Transverse colon (tissue), 4 donors: ENCODE measurements at regions of chr19 and their contacts with region 1.

Region 1: DNA sequence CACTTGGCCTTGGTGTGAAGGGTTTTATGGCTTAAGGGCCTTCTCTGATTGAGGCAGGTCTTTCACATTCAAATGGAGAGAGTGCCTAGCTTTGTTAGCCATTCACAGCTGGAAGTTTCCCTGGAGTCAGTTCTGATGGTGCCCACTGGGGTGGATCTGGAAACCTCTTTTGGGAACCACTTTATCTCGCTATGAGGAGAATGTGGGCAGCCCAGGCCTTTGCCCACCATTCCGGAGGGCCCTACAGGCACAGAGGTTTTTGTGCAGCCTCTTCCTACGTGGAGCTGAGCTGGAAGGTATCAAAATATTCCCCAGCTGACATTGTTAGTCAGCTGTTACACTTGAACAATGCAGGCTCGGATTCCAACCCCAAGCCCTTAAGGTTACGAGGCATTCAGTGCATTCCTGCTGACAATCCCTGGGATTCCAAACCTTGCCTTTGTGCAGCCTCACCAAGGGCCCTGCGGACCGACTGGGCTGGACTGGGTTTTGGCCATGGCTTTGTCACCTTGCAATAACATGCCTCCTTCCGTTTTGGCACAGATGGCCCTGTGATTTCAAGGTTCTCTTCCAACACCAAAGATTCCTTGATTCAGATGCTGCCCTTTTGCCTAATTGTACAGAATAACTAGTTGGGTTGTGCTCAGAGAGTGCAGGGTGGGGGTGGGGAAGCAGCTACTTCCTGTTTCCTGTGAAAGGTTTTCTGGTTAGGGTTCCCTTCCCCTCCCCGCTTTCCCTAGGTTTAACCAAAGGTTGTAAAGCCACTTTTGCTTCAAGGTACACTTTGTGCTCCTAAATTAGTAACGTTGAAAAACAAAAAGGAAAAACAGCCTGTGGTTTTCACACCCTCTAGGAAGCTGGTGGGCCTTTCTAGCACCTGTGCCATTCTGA is 27.0 kb downstream of the SAE1 start:
- DNase-seq: peak; percentile 64
- H3K4me3 ChIP-seq: peak overlapping the region in 1 of 4 donors; percentile 27
- H3K27ac ChIP-seq: peak overlapping the region; percentile 88 to 93 (median 88)
- H3K4me1 ChIP-seq: peaks cover 34 to 67% (median 59%) of the 10 kb centered on the region in 4 donors
- H3K27me3 ChIP-seq: no peaks in the 10 kb centered on the region
- CTCF ChIP-seq: peak in 3 of 5 experiments; percentile 3 to 57 (median 51)
- EP300 ChIP-seq: no peak
- POLR2A ChIP-seq: no peak

Region 2: DNA sequence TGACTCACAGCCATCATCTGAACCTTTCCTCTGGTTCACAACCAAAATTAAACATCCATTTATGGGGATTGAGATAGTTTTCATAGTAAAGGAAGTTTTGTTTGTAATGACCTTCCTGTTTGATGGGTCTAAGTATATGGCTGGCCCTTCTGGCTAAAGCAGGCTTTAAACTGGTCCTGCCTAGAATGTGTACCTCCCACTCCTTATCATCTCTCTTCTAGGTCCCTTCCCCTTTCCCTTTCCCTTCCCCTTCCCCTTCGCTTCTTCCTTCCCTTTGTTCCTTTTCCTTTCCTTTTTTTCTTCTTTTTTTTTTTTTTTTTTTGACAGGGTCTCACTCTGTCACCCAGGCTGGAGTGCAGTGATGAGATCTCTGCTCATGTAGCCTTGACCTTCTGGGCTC is 37.8 kb after region 1 on chr19:
- in situ Hi-C with region 1: loop called in 1 of 4 experiments (anchors 5 kb)
- intact Hi-C with region 1: loop called (anchors 10 kb)
- DNase-seq: no peak
- H3K4me3 ChIP-seq: no peak overlapping the region
- H3K27ac ChIP-seq: no peak overlapping the region
- H3K4me1 ChIP-seq: peaks cover 7 to 15% (median 12%) of the 10 kb centered on the region in 4 donors
- H3K27me3 ChIP-seq: no peaks in the 10 kb centered on the region
- CTCF ChIP-seq: no peak
- EP300 ChIP-seq: no peak
- POLR2A ChIP-seq: no peak

Region 3: DNA sequence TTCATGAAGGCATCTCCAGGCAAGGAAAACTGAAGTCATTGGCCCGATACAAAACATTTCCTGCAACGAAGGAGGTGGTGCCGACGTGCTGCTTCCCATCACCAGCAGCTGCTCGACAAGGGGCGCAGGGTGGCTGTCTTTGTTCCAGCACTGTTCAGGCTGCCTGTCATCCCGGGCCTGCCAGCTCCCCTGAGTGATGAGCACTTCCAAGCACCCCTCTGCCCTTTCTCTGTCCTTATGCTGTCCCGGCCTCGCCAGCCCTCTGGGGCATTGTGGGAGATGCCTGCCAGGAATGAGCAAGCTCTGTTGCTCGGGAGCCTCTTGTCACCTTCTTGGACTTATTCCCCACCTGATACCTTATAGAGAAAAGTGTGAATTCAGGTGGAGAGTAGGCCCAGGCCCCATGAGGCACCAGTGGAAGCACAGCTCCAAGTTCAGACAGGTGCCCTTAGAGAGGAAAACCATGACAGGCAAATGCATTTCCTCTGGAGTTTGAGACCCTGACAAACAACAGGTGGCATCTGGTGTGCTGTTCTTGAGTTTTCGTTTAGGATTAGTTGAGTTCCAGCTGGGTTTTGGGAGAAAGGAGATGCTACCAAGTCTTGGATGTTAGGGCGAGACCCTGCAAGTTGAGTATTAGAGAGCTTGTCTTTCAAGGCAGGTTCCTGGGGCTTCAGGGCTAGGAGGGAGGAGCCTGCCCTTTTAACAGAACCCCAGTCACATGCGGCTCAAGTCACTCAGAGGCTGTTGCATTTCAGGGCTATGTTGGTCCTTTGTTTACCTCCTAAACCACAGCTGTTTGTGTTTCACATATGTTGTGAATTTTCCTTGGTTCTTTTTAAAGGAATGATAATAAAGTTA is 51.9 kb after region 1 on chr19:
- in situ Hi-C with region 1: no loop called
- intact Hi-C with region 1: loop called (anchors 10 kb)
- DNase-seq: no peak
- H3K4me3 ChIP-seq: no peak overlapping the region
- H3K27ac ChIP-seq: peak overlapping the region; percentile 70 to 74 (median 73)
- H3K4me1 ChIP-seq: peaks cover 7 to 10% (median 9%) of the 10 kb centered on the region in 4 donors
- H3K27me3 ChIP-seq: no peaks in the 10 kb centered on the region
- CTCF ChIP-seq: no peak
- EP300 ChIP-seq: no peak
- POLR2A ChIP-seq: no peak

Region 4: DNA sequence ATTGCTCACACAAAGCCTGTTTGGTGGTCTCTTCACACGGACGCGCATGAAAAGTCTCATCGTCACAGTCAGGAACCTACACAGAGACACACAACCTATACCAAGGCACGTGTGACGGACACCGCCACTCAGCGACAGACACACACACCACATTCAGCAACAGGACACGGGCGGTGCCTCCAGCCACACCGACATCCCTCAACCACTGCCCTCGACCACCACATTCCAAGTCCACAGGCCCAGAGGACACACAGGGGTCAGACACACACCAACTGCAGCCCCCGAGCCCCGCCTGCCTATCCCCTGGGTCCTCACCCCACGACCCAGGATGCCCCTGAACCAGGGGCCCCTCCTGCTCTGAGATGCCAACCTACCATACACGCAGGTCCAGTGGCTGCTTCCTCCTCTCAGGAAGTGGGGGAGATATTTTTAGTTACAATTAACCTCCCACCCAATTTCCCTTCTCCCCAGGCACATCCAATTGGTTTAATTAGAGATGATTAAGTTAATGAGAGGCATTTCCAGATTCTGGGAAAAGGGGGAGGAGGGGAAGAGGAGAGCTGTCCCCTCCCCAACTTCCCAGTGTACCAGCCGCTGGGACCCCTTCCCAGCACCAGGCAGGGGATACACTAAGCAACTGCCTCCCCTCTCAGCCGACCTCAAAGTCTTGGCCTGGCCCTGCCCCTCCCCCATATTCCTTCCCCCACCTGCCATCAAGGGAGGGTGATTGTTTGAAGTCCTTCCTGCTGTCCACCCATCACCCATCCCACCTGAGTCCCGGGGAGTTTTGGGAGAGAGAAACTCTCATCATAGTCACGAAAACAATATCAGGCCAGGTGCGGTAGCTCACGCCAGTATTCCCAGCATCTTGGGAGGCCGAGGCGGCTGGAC is 241.3 kb after region 1 on chr19:
- in situ Hi-C with region 1: no loop called
- intact Hi-C with region 1: no loop called
- DNase-seq: no peak
- H3K4me3 ChIP-seq: no peak overlapping the region
- H3K27ac ChIP-seq: no peak overlapping the region
- H3K4me1 ChIP-seq: no peaks in the 10 kb centered on the region
- H3K27me3 ChIP-seq: peaks cover 13% of the 10 kb centered on the region
- CTCF ChIP-seq: no peak
- EP300 ChIP-seq: no peak
- POLR2A ChIP-seq: no peak